Aorta (tissue), 5 donors: ENCODE measurements at regions of chr1 and their contacts with region 1.

Region 1: DNA sequence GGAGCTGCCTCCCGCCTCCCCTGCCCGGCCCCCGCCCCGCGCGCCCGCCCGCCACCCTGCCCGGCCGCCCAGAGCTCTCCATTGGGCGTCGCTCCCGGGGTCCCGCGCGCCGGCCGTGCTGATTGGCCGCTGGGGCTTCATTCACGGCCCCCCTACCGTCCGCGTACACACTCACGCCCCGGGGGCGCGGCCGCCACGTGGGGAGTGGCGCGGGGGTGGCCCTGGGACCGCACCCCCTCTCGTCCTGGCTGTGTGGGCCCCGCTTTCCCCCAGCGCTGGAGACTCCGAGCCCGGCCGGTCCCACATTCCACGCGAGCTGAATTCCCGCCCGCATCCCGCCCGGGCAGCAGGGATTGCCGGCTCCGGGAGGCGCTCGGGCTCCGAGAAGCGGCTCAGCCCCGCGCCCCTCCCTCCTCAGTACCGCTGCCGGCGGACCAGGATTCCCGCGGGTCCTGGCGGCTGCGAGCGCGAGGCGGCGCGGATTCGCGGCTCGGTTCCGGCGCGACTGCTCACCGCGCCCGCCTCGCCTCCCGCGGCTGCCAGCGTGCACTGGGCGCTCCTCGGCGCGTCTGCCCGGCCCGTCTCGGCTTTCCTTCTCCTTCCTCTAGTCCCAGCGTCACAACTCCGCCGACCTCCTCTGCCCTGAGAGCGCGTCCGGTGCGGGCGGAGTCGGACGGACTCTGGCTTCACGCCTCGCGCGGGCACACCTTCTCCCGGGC is 450 bp upstream of the POU3F1 start:
- DNase-seq: peak; percentile 90 to 96
- ATAC-seq: peak; percentile 93
- H3K4me3 ChIP-seq: peak overlapping the region; percentile 40 to 69
- H3K27ac ChIP-seq: peak overlapping the region in 1 of 2 donors; percentile 5
- H3K4me1 ChIP-seq: no peaks in the 10 kb centered on the region
- H3K27me3 ChIP-seq: peaks cover 0 to 3% of the 10 kb centered on the region in 2 donors

Region 2: DNA sequence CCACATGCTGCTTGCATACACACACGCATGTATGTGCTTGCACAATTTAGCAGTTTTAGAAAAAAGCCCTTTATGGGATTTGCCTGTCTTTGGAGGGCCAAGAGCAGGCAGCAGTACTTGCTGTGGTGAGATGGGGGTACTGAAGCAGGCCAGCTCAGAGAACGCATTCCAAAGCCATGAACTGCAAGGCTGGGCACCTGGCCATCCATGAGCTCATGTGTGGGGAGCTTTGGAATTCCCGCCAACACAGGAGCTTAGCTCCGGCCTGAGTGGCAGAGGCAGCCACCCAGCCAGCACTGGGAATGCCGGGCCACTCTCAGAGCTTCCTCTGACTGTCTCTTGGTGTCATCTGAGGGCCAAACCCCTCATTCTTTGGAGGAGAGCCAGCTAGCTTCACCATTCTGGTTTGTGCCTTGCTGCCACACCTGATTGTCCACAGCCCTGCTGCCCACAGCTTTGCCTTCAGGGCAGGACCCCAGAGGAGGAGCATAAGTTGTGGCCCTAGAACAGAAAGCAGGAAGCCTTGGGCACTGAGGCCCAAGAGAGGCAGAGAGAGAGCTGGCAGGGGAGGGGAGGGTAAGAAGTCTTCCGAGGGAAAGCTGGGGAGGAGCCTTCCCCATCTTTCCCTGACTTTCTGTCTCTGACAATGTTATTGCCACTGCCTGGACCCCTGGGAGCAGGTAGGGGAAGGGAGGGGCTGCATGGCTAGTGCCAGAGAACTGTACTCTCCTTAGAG is 91.6 kb after region 1 on chr1:
- intact Hi-C with region 1: loop called in 1 of 2 experiments (anchors 5 kb)
- DNase-seq: peak; percentile 90
- ATAC-seq: peak; percentile 89
- H3K4me3 ChIP-seq: no peak overlapping the region
- H3K27ac ChIP-seq: peak overlapping the region in 1 of 2 donors; percentile 83
- H3K4me1 ChIP-seq: peaks cover 0 to 2% of the 10 kb centered on the region in 2 donors
- H3K27me3 ChIP-seq: no peaks in the 10 kb centered on the region